CD8-positive, alpha-beta T cell (primary cell): ENCODE measurements at regions of chr1 and their contacts with region 1.

Region 1: DNA sequence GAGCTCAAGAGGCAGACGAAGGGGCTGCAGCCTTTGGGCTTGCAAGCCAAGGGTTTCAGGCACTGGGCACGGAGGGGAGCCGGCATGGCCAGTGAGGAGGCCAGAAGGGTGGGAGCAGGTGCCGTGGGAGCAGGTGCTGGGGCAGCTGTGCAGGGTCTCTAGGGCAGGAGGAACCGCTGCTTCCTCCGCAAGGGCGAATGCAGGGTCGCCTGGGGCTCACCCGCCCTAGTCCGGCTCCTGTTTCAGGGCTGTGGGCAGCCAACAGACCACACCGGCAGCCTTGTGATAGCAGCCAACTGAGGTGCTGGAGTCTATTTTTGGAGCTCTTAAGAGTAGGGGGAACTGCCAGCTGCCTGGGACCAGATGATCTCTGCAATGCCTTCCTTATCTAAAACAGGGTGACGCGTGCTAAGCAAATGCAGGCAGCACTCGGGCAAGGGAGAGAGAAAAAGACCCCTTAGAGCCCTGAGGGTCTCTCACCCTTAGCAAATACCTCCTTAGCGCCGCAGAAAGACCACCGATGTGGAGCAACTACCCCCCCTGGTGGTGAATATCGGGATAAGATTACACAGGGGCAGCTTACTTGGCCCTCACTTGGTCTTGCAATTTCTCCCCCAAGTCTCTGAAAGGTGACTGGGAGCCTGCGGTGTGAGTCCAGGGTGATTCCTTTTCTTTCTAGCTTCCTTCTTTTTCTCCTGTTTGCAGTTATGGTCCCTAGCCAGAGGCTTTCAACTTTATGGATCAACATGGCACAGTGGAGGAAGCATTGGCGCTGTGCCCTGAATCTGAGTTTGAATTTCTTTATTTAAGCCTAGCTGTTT is 20.7 kb upstream of the MAPKAPK2 start:
- DNase-seq: peak; percentile 46 to 83 (median 76)
- ATAC-seq: peak; percentile 94
- H3K4me3 ChIP-seq: no peak overlapping the region
- H3K4me3 Mint-ChIP-seq: no peak overlapping the region
- H3K27ac ChIP-seq: no peak overlapping the region
- H3K27ac Mint-ChIP-seq: no peak overlapping the region
- H3K4me1 ChIP-seq: peaks cover 5% of the 10 kb centered on the region
- H3K4me1 Mint-ChIP-seq: peaks cover 16% of the 10 kb centered on the region
- H3K27me3 ChIP-seq: peaks cover 0 to 7% of the 10 kb centered on the region in 2 experiments
- H3K27me3 Mint-ChIP-seq: peaks cover 21% of the 10 kb centered on the region
- CTCF ChIP-seq: peak; percentile 89

Region 2: DNA sequence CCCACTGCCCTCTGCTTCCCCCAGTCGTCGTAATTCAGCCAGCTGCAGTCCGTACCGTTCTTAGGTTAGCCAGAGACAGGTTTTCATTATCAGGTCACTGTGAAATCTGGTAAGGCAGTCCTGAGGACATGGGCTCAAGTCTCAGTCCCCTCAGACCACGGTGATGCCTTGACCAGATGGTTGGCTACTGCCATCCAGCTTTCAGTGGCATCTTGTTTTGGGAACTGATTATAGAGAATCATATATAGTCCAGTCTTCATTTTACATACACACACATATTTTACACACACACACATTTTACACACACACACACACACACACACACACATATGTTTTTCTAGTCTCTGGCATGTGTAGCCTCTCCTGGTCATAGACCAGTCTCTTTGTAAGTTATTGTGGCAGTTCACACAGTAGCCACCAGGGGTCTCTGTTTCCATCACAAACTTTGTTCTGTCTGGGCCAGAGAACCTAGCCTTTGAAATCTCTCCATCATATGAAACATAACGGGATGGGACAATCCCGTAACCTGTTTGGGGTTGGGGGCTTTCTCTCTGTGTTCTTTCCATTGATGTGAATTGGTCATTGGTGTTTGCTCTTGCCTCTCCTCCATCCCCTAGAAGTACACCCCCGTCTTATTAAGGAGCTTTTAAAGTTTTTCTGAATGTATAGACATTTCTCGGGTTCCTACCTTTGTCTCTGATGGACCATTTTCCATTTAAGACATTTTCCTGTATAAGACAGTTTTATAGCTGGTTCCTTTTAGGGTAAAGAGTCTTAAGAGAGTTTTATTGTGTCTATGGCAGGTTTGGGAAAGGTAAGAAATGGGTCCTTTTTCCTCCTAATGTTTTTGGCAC is 202.2 kb before region 1 on chr1:
- CTCF ChIA-PET with region 1: interaction called, 79 read pairs
- POLR2A ChIA-PET with region 1: no interaction called
- intact Hi-C with region 1: loop called (anchors 1 kb)
- DNase-seq: peak; percentile 54 to 82 (median 74)
- ATAC-seq: peak; percentile 95
- H3K4me3 ChIP-seq: no peak overlapping the region
- H3K4me3 Mint-ChIP-seq: no peak overlapping the region
- H3K27ac ChIP-seq: no peak overlapping the region
- H3K27ac Mint-ChIP-seq: no peak overlapping the region
- H3K4me1 ChIP-seq: peaks cover 10% of the 10 kb centered on the region
- H3K4me1 Mint-ChIP-seq: peaks cover 19% of the 10 kb centered on the region
- H3K27me3 ChIP-seq: no peaks in the 10 kb centered on the region
- H3K27me3 Mint-ChIP-seq: no peaks in the 10 kb centered on the region
- CTCF ChIP-seq: peak; percentile 75

Region 3: DNA sequence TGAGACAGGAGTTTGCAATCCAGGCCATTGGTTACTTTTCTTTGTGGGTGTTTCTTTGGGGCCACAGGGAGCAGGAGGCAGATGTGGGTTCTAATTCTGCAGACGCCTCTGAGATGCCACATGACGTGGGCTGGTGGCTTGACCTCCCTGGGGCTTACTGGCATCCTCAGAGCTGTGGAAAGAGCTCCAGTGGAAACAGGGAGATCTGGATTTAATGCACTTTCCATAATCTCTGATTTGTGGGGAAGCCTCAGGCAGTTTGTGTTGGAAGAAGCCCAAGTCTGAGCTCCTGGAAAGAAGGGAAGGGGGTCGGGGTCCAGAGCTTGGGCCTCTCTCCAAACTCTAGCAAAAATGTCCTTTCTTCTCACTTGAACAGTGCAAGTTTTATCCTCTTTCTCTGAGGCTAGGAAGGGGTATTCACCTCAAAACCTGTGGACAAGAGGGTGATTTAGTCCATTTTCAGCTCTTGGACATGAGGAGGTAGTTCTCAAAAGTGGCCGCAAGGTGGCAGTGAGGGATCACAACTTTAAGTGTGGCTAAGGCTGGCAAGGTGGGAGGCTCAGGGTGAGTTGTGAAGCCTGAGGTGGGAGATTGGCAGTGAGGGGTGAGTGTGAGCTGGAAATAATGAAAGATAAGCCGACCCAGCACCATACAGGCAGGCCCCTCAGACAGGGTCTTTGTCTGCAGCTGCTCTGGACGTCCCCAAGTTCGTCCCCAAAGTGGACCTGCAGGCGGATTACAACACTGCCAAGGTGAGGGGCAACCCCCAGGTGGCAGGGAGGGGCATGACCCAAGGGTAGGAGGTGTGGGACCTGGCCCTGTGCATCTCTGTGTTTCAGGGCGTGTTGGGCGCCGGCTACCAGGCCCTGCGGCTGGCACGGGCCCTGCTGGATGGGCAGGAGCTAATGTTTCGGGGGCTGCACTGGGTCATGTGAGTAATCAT is 184.6 kb before region 1 on chr1:
- CTCF ChIA-PET with region 1: interaction called, 89 read pairs
- POLR2A ChIA-PET with region 1: no interaction called
- intact Hi-C with region 1: loop called (anchors 1 kb)
- DNase-seq: peak; percentile 46 to 82 (median 73)
- ATAC-seq: peak; percentile 93
- H3K4me3 ChIP-seq: no peak overlapping the region
- H3K4me3 Mint-ChIP-seq: no peak overlapping the region
- H3K27ac ChIP-seq: no peak overlapping the region
- H3K27ac Mint-ChIP-seq: peak overlapping the region; percentile 80
- H3K4me1 ChIP-seq: peaks cover 13% of the 10 kb centered on the region
- H3K4me1 Mint-ChIP-seq: peaks cover 10% of the 10 kb centered on the region
- H3K27me3 ChIP-seq: no peaks in the 10 kb centered on the region
- H3K27me3 Mint-ChIP-seq: no peaks in the 10 kb centered on the region
- CTCF ChIP-seq: peak; percentile 80

Region 4: DNA sequence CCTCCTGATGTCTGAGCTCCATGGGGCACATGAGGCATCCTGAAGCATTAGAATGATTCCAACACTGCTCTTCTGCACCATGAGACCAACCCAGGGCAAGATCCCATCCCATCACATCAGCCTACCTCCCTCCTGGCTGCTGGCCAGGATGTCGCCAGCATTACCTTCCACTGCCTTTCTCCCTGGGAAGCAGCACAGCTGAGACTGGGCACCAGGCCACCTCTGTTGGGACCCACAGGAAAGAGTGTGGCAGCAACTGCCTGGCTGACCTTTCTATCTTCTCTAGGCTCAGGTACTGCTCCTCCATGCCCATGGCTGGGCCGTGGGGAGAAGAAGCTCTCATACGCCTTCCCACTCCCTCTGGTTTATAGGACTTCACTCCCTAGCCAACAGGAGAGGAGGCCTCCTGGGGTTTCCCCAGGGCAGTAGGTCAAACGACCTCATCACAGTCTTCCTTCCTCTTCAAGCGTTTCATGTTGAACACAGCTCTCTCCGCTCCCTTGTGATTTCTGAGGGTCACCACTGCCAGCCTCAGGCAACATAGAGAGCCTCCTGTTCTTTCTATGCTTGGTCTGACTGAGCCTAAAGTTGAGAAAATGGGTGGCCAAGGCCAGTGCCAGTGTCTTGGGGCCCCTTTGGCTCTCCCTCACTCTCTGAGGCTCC is 167.8 kb before region 1 on chr1:
- CTCF ChIA-PET with region 1: interaction called, 62 read pairs
- POLR2A ChIA-PET with region 1: no interaction called
- intact Hi-C with region 1: no loop called
- DNase-seq: no peak
- ATAC-seq: no peak
- H3K4me3 ChIP-seq: no peak overlapping the region
- H3K4me3 Mint-ChIP-seq: no peak overlapping the region
- H3K27ac ChIP-seq: no peak overlapping the region
- H3K27ac Mint-ChIP-seq: peak overlapping the region; percentile 74
- H3K4me1 ChIP-seq: no peaks in the 10 kb centered on the region
- H3K4me1 Mint-ChIP-seq: no peaks in the 10 kb centered on the region
- H3K27me3 ChIP-seq: no peaks in the 10 kb centered on the region
- H3K27me3 Mint-ChIP-seq: no peaks in the 10 kb centered on the region
- CTCF ChIP-seq: no peak

Region 5: GRCh38 chr1:206612129-206612876 is 51.7 kb before region 1 on chr1 and contains the start of gene EIF2D:
- CTCF ChIA-PET with region 1: interaction called, 37 read pairs
- POLR2A ChIA-PET with region 1: interaction called, 4 read pairs
- intact Hi-C with region 1: loop called (anchors 1 kb)
- DNase-seq: peak; percentile 89 to 96 (median 94)
- ATAC-seq: peak; percentile 99
- H3K4me3 ChIP-seq: peak within 1 kb of the TSS; percentile 90 to 91
- H3K4me3 Mint-ChIP-seq: peak within 1 kb of the TSS; percentile 92
- H3K27ac ChIP-seq: peak within 1 kb of the TSS; percentile 84 to 86
- H3K27ac Mint-ChIP-seq: peak within 1 kb of the TSS; percentile 96
- H3K4me1 ChIP-seq: peaks cover 9% of the 10 kb centered on the region
- H3K4me1 Mint-ChIP-seq: peaks cover 17% of the 10 kb centered on the region
- H3K27me3 ChIP-seq: no peaks in the 10 kb centered on the region
- H3K27me3 Mint-ChIP-seq: no peaks in the 10 kb centered on the region
- CTCF ChIP-seq: peak; percentile 91
- total RNA-seq, gene EIF2D: 42.0 to 49.2 TPM

Region 6: DNA sequence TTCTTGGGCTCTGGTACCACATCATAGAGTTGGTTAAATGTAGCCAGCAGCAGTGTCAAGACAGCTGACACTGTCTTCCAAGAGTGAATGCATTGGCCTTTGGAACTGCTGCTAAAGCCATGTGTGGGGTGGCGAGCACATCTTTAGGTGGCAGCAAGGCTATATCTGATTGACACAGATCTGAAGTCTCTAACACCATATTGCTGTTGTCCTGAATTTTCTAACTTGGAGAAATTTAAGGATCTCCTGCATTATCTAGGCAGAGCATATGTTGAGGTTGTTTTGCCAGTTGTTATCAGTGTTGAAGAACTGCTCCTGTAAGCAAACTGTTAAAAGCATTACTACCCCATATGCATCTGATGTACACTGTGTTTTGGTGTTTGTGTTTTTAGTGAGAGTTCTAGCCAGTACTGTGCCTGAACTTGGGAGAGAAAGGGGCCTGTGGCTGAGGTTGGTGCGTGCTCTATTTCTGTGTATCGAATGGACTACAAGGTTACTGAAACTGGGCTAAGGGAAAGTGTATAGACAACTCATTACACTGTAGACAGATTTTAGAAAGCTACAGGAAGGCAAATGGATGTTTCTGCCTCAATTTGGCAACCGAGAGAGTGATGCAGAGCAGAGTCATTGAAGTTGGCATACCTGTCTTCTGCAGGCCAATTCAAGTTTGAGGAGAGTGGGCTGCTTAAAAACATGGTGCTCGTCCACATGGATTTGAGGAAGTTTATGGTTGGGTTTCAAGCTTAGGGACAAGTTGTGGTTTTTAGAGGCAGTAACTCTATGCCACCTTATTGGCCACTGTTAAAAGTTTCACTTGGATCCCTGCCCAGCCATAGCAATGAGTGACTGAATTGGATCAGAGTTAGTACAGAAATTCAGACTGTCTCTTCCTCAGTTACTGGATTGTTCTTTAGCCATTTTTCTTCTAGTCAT is 11.8 kb before region 1 on chr1:
- CTCF ChIA-PET with region 1: interaction called, 78 read pairs
- POLR2A ChIA-PET with region 1: interaction called, 3 read pairs
- intact Hi-C with region 1: no loop called
- DNase-seq: no peak
- ATAC-seq: no peak
- H3K4me3 ChIP-seq: no peak overlapping the region
- H3K4me3 Mint-ChIP-seq: no peak overlapping the region
- H3K27ac ChIP-seq: no peak overlapping the region
- H3K27ac Mint-ChIP-seq: no peak overlapping the region
- H3K4me1 ChIP-seq: no peaks in the 10 kb centered on the region
- H3K4me1 Mint-ChIP-seq: no peaks in the 10 kb centered on the region
- H3K27me3 ChIP-seq: no peaks in the 10 kb centered on the region
- H3K27me3 Mint-ChIP-seq: peaks cover 6% of the 10 kb centered on the region
- CTCF ChIP-seq: no peak

Region 7: DNA sequence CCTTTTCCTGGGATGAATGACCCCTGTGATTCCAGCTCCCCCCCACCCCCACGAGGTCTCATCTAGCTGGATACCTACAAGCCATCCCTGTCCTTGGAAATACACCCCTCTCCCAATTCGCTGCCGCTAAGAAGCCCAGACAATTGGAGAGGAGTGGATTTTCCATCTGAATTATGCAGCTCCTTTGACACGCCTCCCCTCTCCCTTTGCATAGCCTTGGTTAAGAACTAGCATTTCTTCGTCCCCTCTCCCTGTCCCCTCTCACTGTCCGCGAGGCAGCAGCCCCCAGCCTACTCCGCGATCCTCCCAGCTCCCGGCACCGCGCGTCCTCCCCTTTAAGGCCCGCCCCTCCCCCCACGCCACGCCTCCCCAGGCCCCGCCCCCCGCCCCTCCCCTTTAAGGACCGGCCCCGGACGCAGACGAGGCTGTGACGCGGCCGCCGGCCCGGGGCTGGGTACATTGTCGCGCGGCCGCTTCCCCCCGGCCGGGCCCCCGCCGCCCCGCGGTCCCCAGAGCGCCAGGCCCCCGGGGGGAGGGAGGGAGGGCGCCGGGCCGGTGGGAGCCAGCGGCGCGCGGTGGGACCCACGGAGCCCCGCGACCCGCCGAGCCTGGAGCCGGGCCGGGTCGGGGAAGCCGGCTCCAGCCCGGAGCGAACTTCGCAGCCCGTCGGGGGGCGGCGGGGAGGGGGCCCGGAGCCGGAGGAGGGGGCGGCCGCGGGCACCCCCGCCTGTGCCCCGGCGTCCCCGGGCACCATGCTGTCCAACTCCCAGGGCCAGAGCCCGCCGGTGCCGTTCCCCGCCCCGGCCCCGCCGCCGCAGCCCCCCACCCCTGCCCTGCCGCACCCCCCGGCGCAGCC is 20.7 kb after region 1 on chr1 and contains the start of gene MAPKAPK2:
- CTCF ChIA-PET with region 1: interaction called, 18 read pairs
- POLR2A ChIA-PET with region 1: no interaction called
- intact Hi-C with region 1: no loop called
- DNase-seq: peak; percentile 62 to 88 (median 76)
- ATAC-seq: peak; percentile 74
- H3K4me3 ChIP-seq: peak within 1 kb of the TSS; percentile 81 to 85
- H3K4me3 Mint-ChIP-seq: peak within 1 kb of the TSS; percentile 96
- H3K27ac ChIP-seq: peak within 1 kb of the TSS; percentile 76 to 88
- H3K27ac Mint-ChIP-seq: peak within 1 kb of the TSS; percentile 97
- H3K4me1 ChIP-seq: peaks cover 23% of the 10 kb centered on the region
- H3K4me1 Mint-ChIP-seq: peaks cover 39% of the 10 kb centered on the region
- H3K27me3 ChIP-seq: no peaks in the 10 kb centered on the region
- H3K27me3 Mint-ChIP-seq: no peaks in the 10 kb centered on the region
- CTCF ChIP-seq: no peak
- total RNA-seq, gene MAPKAPK2: 218 to 225 TPM